Left colon (tissue), 2 donors: ENCODE measurements at regions of chr10 and their contacts with region 1.

Region 1: GRCh38 chr10:93482145-93482834 is at the start of gene MYOF:
- DNase-seq: peak; percentile 50 to 65
- ATAC-seq: peak; percentile 84
- total RNA-seq, gene MYOF: 106 to 110 TPM

Region 2: GRCh38 chr10:93376372-93377293 is 105.7 kb before region 1 on chr10:
- intact Hi-C with region 1: loop called (anchors 2 to 5 kb)
- DNase-seq: peak; percentile 15 to 70
- ATAC-seq: peak; percentile 95